ENCODE measurements at regions of chr3 and their contacts with region 1.

Region 1: GRCh38 chr3:124467980-124468902 is 262.0 kb upstream of the UMPS start:
- DNase-seq: peak; percentile 80
- ATAC-seq: peak; percentile 94
- H3K4me3 ChIP-seq: no peak overlapping the region
- H3K27ac ChIP-seq: no peak overlapping the region
- H3K4me1 ChIP-seq: peaks cover 7% of the 10 kb centered on the region
- H3K27me3 ChIP-seq: peaks cover 25% of the 10 kb centered on the region
- CTCF ChIP-seq: peak; percentile 100

Region 2: DNA sequence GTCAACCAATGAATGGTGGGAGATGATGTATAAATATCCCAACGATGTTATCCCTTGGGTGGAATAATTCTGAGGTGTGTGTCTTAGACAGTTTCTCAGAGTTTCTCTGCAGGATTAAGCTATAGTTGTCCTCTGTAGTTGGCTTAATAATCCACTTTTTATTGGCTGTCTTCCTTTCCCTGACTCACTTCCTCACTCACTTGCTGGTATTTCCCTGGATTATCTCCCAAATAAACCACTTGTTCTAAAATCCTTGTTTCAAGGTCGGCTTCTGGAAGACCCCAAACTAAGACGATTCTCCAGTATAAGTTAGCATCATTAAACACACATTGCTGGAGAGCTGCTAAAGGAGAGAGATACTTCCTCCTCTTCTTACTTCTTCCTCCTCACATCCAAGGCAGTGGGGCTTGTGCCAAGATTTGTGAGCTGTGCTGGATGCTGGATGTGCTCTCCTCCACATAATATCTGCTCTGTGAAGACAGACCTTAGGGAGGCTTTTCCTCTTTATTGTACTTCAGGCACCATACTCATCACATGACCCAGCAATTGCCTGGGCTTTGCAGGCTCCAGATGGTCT is 453.8 kb before region 1 on chr3:
- CTCF ChIA-PET with region 1: no interaction called
- POLR2A ChIA-PET with region 1: no interaction called
- intact Hi-C with region 1: loop called (anchors 2 kb)
- DNase-seq: peak; percentile 16
- ATAC-seq: peak; percentile 31; the same call in 1 of the 2 replicates
- H3K4me3 ChIP-seq: no peak overlapping the region
- H3K27ac ChIP-seq: no peak overlapping the region
- H3K4me1 ChIP-seq: no peaks in the 10 kb centered on the region
- H3K27me3 ChIP-seq: peaks cover 20% of the 10 kb centered on the region
- CTCF ChIP-seq: no peak

Region 3: DNA sequence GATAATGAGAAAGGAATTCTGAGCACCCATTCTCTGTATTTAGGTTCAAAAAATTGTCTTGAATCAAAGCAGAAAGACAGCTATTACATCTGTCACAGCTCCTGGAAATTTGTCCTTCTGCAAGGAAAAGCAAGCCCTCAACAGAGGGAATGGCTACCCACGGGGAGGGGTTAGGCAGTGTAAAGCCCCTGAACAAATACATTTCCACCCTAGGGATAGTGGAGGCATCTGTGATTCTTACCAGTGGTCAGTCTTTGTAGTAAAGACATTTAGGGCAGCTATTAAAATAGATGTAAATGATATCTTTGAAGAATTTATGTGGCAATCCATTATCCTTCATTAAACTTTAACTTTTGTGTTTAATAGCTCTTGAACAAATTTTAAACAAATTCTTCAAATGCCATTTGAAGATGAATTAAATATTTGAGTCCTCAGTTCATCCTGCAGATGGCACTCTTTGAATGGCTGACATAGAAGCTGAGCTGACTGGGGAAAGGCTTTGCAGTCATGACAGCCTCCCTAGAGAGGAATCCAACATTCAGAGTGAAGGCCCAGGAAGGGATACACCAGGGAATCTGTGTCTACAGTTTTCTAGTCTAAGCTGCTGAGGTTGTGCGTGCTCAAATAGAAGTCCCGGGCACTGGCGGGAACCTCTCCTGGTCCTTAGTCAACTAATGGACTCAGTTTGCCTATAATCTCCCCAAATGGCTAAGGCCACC is 116.7 kb before region 1 on chr3:
- CTCF ChIA-PET with region 1: interaction called, 11 read pairs
- POLR2A ChIA-PET with region 1: no interaction called
- intact Hi-C with region 1: loop called (anchors 1 kb)
- DNase-seq: peak; percentile 84
- ATAC-seq: peak; percentile 91
- H3K4me3 ChIP-seq: no peak overlapping the region
- H3K27ac ChIP-seq: no peak overlapping the region
- H3K4me1 ChIP-seq: no peaks in the 10 kb centered on the region
- H3K27me3 ChIP-seq: peaks cover 9% of the 10 kb centered on the region; the same call in 1 of the 2 replicates
- CTCF ChIP-seq: peak; percentile 95

Region 4: DNA sequence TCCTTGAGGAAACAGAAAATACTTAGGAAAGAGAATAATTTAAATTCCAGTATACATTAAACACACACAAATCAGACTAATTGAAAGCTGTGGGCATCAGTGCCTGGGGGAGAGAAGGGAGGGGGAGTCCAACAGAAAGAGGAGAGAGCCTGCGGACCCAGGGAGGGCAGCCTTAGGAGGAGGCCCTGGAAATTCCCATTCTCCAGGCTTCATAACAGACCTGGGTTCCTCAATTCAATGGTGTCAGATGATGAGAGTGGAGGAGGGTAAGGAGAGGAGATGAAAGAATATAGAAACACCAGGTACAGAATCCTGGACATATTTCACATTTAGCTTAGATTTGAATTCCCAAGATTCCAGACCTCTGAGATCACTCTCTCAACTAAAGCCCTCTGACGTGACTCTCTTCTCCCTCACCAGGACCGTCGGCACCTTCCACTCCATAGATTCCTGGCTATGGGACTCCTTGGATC is 58.4 kb before region 1 on chr3:
- CTCF ChIA-PET with region 1: no interaction called
- POLR2A ChIA-PET with region 1: no interaction called
- intact Hi-C with region 1: no loop called
- DNase-seq: peak; percentile 90
- ATAC-seq: peak; percentile 84
- H3K4me3 ChIP-seq: peak overlapping the region; percentile 8; the same call in 1 of the 2 replicates
- H3K27ac ChIP-seq: no peak overlapping the region
- H3K4me1 ChIP-seq: peaks cover 30% of the 10 kb centered on the region
- H3K27me3 ChIP-seq: no peaks in the 10 kb centered on the region
- CTCF ChIP-seq: no peak

Region 5: DNA sequence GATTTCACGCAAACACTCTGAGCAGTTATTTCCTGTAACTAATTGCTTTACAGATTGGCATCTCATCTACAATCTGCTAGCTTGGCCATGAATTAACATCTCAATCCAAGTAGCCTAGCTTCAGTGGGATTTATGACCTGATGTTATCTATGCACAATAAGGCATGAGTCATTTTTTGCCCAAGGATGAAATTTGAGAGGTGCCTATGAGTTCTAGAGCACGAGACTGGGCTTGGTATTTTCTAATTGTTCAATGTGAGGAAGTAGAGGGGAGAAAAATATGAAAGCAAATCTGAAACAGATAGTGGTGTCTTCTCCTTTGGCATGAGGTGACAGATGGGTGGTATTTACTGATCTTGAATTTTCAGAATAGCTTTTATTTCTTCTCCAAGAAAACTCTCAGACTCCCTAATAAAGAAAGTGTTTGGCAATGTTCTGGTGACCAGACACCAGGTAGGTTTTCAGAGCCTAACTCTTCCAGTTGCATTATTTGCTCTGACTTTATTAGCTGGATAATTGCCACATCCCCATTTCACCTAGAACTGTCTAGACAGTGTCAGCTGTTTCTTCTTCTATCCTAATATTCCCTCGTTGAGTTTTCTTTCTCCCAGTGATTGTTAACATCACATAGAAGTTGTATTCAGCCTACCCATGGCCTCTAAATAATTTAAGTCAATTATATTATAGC is 39.0 kb before region 1 on chr3:
- CTCF ChIA-PET with region 1: no interaction called
- POLR2A ChIA-PET with region 1: no interaction called
- intact Hi-C with region 1: loop called (anchors 2 kb)
- DNase-seq: peak; percentile 94
- ATAC-seq: peak; percentile 95
- H3K4me3 ChIP-seq: peak overlapping the region; percentile 6; the same call in 1 of the 2 replicates
- H3K27ac ChIP-seq: peak overlapping the region; percentile 50
- H3K4me1 ChIP-seq: peaks cover 28% of the 10 kb centered on the region
- H3K27me3 ChIP-seq: no peaks in the 10 kb centered on the region
- CTCF ChIP-seq: no peak

Region 6: GRCh38 chr3:124444075-124444474 is 24.2 kb before region 1 on chr3:
- CTCF ChIA-PET with region 1: no interaction called
- POLR2A ChIA-PET with region 1: no interaction called
- intact Hi-C with region 1: no loop called
- DNase-seq: no peak
- ATAC-seq: no peak
- H3K4me3 ChIP-seq: no peak overlapping the region
- H3K27ac ChIP-seq: no peak overlapping the region
- H3K4me1 ChIP-seq: no peaks in the 10 kb centered on the region
- H3K27me3 ChIP-seq: peaks cover 9% of the 10 kb centered on the region; the same call in 1 of the 2 replicates
- CTCF ChIP-seq: no peak